ENCODE measurements at regions of chr17 and their contacts with region 1.

Region 1: GRCh38 chr17:78360371-78361224 is 721 bp upstream of the SOCS3 start:
- DNase-seq: peak; percentile 92
- ATAC-seq: peak; percentile 32
- H3K4me3 Mint-ChIP-seq: peak overlapping the region; percentile 87
- H3K27ac Mint-ChIP-seq: peak overlapping the region; percentile 72
- H3K4me1 Mint-ChIP-seq: peaks cover 41% of the 10 kb centered on the region
- H3K27me3 Mint-ChIP-seq: peaks cover 6% of the 10 kb centered on the region
- CTCF ChIP-seq: peak; percentile 49

Region 2: DNA sequence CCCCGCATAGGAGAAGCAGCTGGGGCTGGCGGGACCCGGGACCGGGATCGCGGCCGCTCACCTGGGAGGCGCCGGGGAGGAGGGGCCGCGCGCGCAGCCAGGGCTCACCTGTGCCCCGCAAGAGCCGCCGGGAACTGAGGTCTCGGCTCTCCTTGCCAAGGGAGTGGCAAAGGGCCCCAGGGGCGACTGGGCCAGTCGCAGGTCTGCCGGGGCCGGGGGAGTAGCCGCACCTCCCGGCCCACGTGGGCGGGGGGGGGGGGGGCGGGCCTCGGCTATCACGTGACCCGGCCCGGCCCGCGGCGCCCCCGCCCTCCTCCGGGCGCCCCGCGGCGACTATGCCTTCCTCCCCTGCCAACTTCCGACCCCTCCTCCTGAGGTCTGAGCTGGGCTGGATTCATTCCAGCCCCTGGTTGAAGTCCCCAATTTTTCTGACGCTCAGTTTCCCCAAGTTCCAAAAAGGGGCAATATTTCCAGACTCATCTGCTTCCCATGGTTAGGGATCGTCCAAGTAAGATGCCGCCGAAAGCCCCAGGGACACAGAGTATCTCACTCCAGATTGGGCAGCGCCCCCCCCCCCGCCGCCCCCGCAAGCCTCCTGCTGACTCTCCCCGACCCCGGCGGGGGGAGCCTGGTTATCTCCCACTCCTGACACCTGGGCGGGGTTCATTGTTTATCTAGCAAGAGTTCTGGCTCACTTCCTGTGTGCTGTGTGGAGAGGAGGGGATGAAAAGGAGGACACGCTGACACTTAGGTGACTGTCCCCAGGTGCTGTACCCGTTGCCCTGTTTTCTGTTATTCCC is 231.8 kb before region 1 on chr17 and contains the start of gene TMC6:
- CTCF ChIA-PET with region 1: no interaction called
- POLR2A ChIA-PET with region 1: interaction called, 15 read pairs
- intact Hi-C with region 1: loop called (anchors 5 kb)
- DNase-seq: peak; percentile 66
- ATAC-seq: peak; percentile 17
- H3K4me3 Mint-ChIP-seq: peak within 1 kb of the TSS; percentile 92
- H3K27ac Mint-ChIP-seq: peak within 1 kb of the TSS; percentile 93
- H3K4me1 Mint-ChIP-seq: peaks cover 74% of the 10 kb centered on the region
- H3K27me3 Mint-ChIP-seq: no peaks in the 10 kb centered on the region
- CTCF ChIP-seq: no peak
- total RNA-seq, gene TMC6: 746 and 896 TPM in 2 replicates

Region 3: GRCh38 chr17:78186692-78187595 is 173.7 kb before region 1 on chr17 and contains the starts of genes AFMID and TK1:
- CTCF ChIA-PET with region 1: no interaction called
- POLR2A ChIA-PET with region 1: no interaction called
- intact Hi-C with region 1: loop called (anchors 1 kb)
- DNase-seq: peak; percentile 83
- ATAC-seq: peak; percentile 96
- H3K4me3 Mint-ChIP-seq: peak within 1 kb of the TSS; percentile 85
- H3K27ac Mint-ChIP-seq: peak within 1 kb of the TSS; percentile 54
- H3K4me1 Mint-ChIP-seq: peaks cover 18% of the 10 kb centered on the region
- H3K27me3 Mint-ChIP-seq: no peaks in the 10 kb centered on the region
- CTCF ChIP-seq: no peak
- total RNA-seq, gene AFMID: 11.2 and 15.4 TPM in 2 replicates
- total RNA-seq, gene TK1: 3.8 TPM in 2 replicates

Region 4: GRCh38 chr17:78197147-78197832 is 163.3 kb before region 1 on chr17:
- CTCF ChIA-PET with region 1: no interaction called
- POLR2A ChIA-PET with region 1: no interaction called
- intact Hi-C with region 1: no loop called
- DNase-seq: no peak
- ATAC-seq: no peak
- H3K4me3 Mint-ChIP-seq: no peak overlapping the region
- H3K27ac Mint-ChIP-seq: no peak overlapping the region
- H3K4me1 Mint-ChIP-seq: peaks cover 17% of the 10 kb centered on the region
- H3K27me3 Mint-ChIP-seq: no peaks in the 10 kb centered on the region
- CTCF ChIP-seq: no peak

Region 5: GRCh38 chr17:78289802-78290363 is 70.7 kb before region 1 on chr17:
- CTCF ChIA-PET with region 1: interaction called, 11 read pairs
- POLR2A ChIA-PET with region 1: interaction called, 7 read pairs
- intact Hi-C with region 1: loop called (anchors 1 kb)
- DNase-seq: peak; percentile 61
- ATAC-seq: peak; percentile 99
- H3K4me3 Mint-ChIP-seq: no peak overlapping the region
- H3K27ac Mint-ChIP-seq: no peak overlapping the region
- H3K4me1 Mint-ChIP-seq: peaks cover 3% of the 10 kb centered on the region
- H3K27me3 Mint-ChIP-seq: no peaks in the 10 kb centered on the region
- CTCF ChIP-seq: no peak

Region 6: DNA sequence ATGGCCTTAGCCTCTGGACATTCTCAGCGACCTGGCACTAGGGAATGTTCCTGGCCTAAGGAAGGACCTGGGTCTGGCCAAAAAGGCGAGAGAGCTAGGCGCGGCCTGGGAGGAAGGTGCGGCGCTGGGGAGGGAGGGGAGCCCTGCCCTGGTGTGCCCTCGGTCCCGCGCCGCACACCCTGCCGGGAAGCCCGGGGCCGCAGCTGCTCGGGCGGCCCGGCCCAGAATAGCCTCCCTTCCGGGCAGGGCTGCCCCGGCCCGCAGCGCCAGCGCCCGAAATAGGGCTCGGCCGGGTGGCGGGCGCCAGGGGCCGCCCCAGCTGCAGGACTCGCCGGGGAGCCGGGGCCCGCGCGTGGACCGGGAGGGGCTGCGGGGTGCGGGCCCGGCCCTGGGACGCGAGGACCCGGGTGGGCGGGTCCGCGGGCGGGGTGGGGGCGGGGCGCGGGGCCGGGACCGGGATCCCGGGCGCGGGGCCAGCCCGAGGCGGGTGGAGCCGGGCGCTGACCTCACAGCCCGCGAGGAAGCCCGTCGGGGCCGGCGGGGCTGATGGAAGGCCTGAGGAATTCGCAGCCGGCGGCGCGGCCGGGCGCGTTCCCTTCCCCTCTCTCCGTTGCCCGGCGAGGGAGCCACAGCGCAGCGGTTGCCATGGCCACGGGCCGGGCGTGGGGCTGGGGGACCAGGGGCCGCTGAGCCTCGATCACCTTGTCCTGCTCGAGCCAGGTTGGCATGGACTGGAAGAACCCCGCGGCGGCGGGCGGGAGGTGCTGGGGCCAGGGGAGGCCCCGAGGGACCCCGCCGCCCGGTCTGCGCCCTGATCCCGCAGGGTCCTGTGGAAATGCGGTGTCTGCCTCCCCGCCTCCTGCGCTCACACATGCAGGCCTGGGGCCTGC is 18.8 kb before region 1 on chr17:
- CTCF ChIA-PET with region 1: interaction called, 29 read pairs
- POLR2A ChIA-PET with region 1: interaction called, 4 read pairs
- intact Hi-C with region 1: loop called (anchors 1 kb)
- DNase-seq: peak; percentile 48
- ATAC-seq: no peak
- H3K4me3 Mint-ChIP-seq: peak overlapping the region; percentile 79
- H3K27ac Mint-ChIP-seq: peak overlapping the region; percentile 70
- H3K4me1 Mint-ChIP-seq: peaks cover 85% of the 10 kb centered on the region
- H3K27me3 Mint-ChIP-seq: no peaks in the 10 kb centered on the region
- CTCF ChIP-seq: no peak

Region 7: GRCh38 chr17:78378225-78379130 is 17.9 kb after region 1 on chr17 and contains the start of gene PGS1:
- CTCF ChIA-PET with region 1: interaction called, 8 read pairs
- POLR2A ChIA-PET with region 1: no interaction called
- intact Hi-C with region 1: loop called (anchors 1 kb)
- DNase-seq: peak; percentile 80
- ATAC-seq: peak; percentile 65
- H3K4me3 Mint-ChIP-seq: peak within 1 kb of the TSS; percentile 92
- H3K27ac Mint-ChIP-seq: peak within 1 kb of the TSS; percentile 77
- H3K4me1 Mint-ChIP-seq: peaks cover 45% of the 10 kb centered on the region
- H3K27me3 Mint-ChIP-seq: no peaks in the 10 kb centered on the region
- CTCF ChIP-seq: no peak
- total RNA-seq, gene PGS1: 55.2 and 76.1 TPM in 2 replicates

Region 8: DNA sequence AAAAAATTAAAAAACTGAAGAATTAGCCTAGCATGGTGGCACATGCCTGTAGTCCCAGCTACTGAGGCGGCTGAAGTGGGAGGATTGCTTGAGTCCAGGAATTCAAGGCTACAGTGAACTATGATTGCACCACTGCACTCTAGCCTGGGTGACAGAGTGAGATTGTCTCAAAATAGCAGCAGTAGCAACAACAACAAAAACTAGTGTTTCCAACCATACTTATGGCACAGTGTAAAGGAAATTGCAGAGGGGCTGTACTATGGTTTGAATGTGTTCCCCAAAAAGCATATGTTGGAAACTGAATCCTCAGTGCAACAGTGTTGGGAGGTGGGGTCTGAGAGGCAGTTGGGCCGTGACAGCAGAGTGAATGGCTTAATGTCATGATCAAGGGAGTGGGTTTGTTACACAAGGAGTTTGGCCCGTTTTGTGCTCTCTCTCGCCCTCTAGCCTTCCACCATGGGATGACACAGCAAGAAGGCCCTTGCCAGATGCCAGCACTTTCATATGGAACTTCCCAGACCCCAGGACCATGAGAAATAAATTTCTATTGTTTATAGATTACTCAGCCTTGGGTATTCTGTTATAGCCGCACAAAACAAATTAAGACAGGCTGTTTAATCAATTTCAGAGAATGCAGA is 87.9 kb after region 1 on chr17:
- CTCF ChIA-PET with region 1: no interaction called
- POLR2A ChIA-PET with region 1: no interaction called
- intact Hi-C with region 1: no loop called
- DNase-seq: no peak
- ATAC-seq: no peak
- H3K4me3 Mint-ChIP-seq: no peak overlapping the region
- H3K27ac Mint-ChIP-seq: no peak overlapping the region
- H3K4me1 Mint-ChIP-seq: peaks cover 8% of the 10 kb centered on the region
- H3K27me3 Mint-ChIP-seq: peaks cover 5% of the 10 kb centered on the region
- CTCF ChIP-seq: no peak

Region 9: GRCh38 chr17:78532922-78533640 is 172.5 kb after region 1 on chr17:
- CTCF ChIA-PET with region 1: no interaction called
- POLR2A ChIA-PET with region 1: no interaction called
- intact Hi-C with region 1: no loop called
- DNase-seq: no peak
- ATAC-seq: no peak
- H3K4me3 Mint-ChIP-seq: no peak overlapping the region
- H3K27ac Mint-ChIP-seq: no peak overlapping the region
- H3K4me1 Mint-ChIP-seq: no peaks in the 10 kb centered on the region
- H3K27me3 Mint-ChIP-seq: peaks cover 6% of the 10 kb centered on the region
- CTCF ChIP-seq: no peak

Region 10: GRCh38 chr17:78774956-78775571 is 414.5 kb after region 1 on chr17:
- CTCF ChIA-PET with region 1: no interaction called
- POLR2A ChIA-PET with region 1: no interaction called
- intact Hi-C with region 1: loop called (anchors 5 kb)
- DNase-seq: peak; percentile 57
- ATAC-seq: peak; percentile 56
- H3K4me3 Mint-ChIP-seq: peak overlapping the region; percentile 88
- H3K27ac Mint-ChIP-seq: peak overlapping the region; percentile 97
- H3K4me1 Mint-ChIP-seq: peaks cover 85% of the 10 kb centered on the region
- H3K27me3 Mint-ChIP-seq: no peaks in the 10 kb centered on the region
- CTCF ChIP-seq: no peak